Cardiac septum (tissue), 1 donor: ENCODE measurements at regions of chr12 and their contacts with region 1.

Region 1: DNA sequence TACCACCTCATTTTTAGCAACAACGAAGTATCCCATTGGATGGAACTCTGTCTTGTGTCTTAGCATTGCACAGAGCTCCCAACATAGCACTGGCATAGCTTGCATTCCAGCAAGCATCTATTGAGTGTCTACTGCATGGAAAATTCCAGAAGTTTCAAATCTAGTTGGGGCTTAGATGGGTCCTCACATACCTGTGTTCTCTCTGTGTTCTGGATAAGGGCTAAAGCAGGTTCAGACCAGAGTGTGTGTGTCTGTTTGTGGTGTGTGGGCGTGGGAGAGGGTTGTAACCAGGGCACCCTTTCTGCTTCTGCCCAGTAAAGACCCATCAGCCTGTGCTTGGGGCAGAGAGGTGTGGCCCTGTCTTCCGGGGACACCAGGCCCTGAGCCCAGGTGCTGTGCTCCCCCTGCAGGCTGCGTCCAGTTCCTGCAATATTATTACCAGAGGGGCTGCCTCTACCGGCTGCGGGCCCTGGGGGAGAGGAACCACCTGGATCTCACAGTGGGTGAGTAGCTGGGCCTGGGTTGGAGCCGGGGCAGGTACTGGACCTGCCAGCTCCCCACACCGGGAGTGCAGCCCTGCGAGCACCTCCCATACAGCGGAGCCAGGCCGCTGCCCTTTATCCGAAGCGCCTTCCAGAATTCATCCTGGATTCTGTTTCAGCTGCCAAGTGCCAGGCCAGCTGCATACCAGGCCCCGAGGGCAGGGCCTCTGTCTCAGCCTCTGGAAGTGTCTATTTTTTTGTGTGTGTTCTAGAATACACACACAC is 20.3 kb downstream of the RHOF start:
- DNase-seq: no peak

Region 2: DNA sequence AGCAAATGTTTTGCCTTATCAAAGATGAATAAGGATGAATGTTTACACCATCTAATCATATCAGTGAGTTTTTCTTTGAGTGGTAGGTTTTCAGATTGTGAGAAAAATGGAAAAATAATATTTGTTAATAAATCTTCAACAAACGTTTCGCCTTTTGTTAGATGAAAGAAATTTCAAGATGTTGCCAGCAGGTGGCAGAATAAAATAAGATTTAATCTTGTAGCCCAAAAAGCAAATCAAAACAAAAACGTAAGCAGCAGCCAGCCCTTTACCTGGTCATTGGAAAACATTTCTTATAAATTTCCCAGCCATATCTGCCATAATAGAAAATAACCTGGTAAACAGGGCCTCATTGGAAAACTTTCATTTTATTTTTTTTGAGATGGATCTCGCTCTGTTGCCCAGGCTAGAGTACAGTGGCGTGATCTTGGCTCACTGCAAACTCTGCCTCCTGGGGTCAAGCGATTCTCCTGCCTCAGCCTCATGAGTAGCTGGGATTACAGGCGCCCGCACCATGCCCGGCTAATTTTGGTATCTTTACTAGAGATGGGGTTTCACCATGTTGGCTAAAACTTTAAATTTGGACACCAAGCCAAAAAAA is 76.0 kb before region 1 on chr12:
- intact Hi-C with region 1: loop called (anchors 1 kb)
- DNase-seq: no peak

Region 3: GRCh38 chr12:121811434-121812319 is 38.5 kb after region 1 on chr12:
- intact Hi-C with region 1: loop called (anchors 5 kb)
- DNase-seq: peak; percentile 89

Region 4: DNA sequence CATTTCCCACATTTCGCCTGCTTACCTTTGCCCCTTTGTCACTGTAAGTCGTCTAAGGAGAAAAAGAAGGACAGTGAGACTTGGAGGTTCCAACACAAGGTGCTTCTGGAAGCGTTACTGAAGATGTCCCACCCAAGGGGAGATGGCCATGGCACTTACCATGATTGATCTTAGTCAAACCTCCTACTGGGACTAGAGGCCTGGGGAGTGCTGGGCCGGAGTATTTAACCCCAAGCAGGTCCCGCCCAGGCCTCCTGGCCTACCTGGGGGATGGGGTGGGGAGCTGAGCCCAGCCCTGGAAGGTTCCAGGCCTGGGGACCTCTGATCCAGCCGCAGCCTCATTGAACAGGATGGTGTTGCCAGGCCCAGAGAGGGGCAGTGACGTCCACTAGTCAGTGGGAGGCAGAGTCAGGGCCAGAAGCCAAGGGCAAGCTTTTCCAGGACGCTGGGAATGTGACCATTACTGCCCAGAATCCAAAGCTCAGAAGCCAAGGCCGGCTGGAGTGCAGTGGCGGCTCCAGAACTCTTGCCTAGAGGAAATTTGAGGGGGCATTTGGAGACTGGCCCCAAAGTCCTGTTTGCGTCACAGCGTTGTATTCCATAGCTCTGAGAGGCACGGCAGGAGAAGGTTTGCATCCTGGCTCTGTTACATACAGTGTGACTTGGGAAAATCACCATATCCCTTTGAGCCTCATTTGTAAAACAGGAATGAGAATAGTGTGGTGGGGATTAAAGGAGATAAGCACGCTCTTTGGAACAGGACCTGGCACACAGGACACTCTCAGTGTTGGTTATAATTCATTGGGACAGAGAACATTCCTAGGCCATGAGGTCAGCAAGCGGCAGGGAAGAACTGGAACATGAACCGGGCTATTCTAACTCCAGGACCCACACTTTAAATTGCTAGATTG is 85.7 kb after region 1 on chr12 and contains the start of gene HPD:
- intact Hi-C with region 1: no loop called
- DNase-seq: no peak
- total RNA-seq, gene HPD: 1.3 TPM